ENCODE measurements at regions of chr1 and their contacts with region 1.

Region 1: DNA sequence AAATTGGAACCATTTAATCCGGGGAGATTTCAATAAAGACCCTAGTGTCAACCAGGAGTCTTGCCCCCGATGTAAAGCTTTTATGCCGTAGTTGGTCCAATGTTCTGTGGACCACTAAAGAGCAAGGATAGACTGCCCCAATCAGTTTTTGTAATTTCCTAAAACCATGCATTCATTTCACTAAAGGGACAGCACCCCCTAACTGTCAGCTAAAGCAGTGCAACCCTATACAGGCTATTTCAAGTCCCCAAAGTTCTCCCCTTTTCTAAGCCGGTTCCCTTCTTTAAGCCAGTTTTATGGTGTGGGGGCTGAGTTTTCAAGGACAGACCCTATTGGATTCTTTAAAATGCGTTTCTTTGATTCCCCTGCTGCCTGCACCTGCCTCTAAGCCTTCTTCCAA is 12.7 kb upstream of the PDPN start:
- DNase-seq: no peak
- ATAC-seq: peak; percentile 79
- H3K4me3 Mint-ChIP-seq: no peak overlapping the region
- H3K27ac Mint-ChIP-seq: no peak overlapping the region
- H3K4me1 Mint-ChIP-seq: peaks cover 8% of the 10 kb centered on the region
- H3K27me3 Mint-ChIP-seq: peaks cover 2% of the 10 kb centered on the region
- CTCF ChIP-seq: peak; percentile 56

Region 2: GRCh38 chr1:13556219-13556802 is 14.6 kb before region 1 on chr1:
- CTCF ChIA-PET with region 1: interaction called, 10 read pairs
- POLR2A ChIA-PET with region 1: no interaction called
- DNase-seq: no peak
- ATAC-seq: no peak
- H3K4me3 Mint-ChIP-seq: no peak overlapping the region
- H3K27ac Mint-ChIP-seq: no peak overlapping the region
- H3K4me1 Mint-ChIP-seq: no peaks in the 10 kb centered on the region
- H3K27me3 Mint-ChIP-seq: peaks cover 4% of the 10 kb centered on the region
- CTCF ChIP-seq: no peak

Region 3: DNA sequence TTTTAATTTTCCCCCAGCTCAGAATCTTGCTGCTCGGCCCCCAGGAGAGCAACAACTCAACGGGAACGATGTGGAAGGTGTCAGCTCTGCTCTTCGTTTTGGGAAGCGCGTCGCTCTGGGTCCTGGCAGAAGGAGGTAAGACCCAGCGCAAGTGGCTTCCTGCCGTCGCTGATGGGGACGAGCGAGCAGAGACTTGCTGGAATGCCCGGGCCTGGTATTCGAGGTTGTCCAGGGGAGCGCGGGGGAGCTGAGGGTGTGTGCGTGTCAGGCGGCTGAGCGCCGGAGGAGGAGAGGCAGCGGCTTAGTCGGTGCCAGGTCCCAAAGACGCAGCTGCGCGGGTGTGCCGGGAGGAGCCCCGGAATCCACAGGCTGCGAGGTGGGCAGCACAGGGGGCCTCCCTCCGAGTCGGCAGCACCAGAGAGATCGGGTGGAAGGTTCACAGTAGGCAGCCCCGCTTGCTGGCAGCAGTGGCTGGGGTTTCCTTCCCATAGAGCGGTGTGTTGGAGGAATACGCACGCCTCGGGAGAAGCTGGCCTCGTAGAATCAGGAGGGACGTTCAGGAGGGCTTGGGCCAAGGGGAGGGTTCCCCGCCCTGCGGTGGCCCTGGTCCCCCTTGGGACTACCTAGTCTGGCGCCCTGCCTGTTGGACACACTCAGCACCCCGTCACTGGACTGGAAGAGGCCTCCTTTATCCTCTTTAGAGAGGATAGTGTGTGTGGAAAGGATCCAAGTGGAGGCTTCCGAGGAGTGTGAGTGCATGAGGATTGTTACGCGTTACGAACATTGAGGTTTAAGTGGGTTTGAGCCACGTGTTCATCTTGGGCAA is 13.3 kb after region 1 on chr1:
- CTCF ChIA-PET with region 1: interaction called, 27 read pairs
- POLR2A ChIA-PET with region 1: no interaction called
- DNase-seq: peak; percentile 57
- ATAC-seq: peak; percentile 29
- H3K4me3 Mint-ChIP-seq: peak overlapping the region; percentile 92
- H3K27ac Mint-ChIP-seq: peak overlapping the region; percentile 85
- H3K4me1 Mint-ChIP-seq: peaks cover 58% of the 10 kb centered on the region
- H3K27me3 Mint-ChIP-seq: peaks cover 7% of the 10 kb centered on the region; the same call in 1 of the 2 replicates
- CTCF ChIP-seq: no peak

Region 4: DNA sequence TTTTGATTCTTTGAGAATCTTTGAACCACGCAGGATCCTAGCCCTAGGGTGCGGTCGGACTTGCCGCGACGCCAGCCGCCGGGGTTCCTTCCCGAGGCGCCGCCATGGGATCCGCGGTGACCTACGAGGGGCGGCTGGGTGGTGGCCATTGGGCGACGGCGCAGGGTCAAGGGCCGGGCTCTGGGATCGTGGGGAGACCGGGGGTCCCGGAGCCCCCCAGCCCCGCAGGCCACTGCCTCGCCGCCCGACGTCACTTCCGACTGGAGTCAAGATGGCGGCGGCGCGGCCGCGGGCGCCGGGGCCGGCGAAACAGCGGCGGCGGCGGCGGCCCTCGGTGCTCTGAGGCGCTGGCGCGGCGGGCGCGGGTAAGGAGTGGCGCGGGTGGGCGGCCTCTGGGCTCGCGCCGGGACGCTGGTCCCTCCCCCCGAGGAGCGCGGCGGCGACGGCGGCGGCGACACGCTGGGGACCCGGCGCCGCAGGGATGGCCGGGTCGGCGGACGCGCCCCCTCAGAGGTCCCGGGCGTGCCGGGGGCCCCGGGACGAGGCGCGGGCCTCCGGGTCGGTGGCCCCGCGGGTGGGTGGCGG is 129.1 kb after region 1 on chr1 and contains the start of gene PRDM2:
- CTCF ChIA-PET with region 1: no interaction called
- POLR2A ChIA-PET with region 1: no interaction called
- DNase-seq: peak; percentile 34
- ATAC-seq: peak; percentile 61
- H3K4me3 Mint-ChIP-seq: peak within 1 kb of the TSS; percentile 92
- H3K27ac Mint-ChIP-seq: peak within 1 kb of the TSS; percentile 90
- H3K4me1 Mint-ChIP-seq: peaks cover 27% of the 10 kb centered on the region
- H3K27me3 Mint-ChIP-seq: peaks cover 61% of the 10 kb centered on the region
- CTCF ChIP-seq: no peak
- total RNA-seq, gene PRDM2: 19.5 to 27.2 TPM (median 25.0 TPM) in 3 replicates